Cardiac septum (tissue), 1 donor: ENCODE measurements at regions of chr4 and their contacts with region 1.

Region 1: DNA sequence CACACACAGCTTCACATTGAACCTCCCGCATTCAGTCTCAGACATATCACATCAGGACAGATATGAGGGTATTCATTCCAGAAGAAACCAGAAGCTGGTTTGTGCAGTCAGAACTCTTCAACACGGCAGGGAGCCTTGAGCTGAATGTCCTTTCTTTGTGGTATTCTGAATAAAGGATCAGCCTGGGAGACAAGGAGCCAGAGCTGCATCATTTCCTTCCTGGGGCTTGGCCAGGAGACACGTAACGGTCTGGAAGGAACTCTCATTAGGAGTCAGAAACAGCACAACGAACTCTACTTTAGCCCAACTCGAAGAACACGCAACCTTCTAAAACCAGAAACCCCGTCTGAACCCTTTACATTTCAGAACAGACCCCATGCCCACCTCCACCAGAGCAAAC is 46.4 kb downstream of the KDR start:
- DNase-seq: peak; percentile 82

Region 2: DNA sequence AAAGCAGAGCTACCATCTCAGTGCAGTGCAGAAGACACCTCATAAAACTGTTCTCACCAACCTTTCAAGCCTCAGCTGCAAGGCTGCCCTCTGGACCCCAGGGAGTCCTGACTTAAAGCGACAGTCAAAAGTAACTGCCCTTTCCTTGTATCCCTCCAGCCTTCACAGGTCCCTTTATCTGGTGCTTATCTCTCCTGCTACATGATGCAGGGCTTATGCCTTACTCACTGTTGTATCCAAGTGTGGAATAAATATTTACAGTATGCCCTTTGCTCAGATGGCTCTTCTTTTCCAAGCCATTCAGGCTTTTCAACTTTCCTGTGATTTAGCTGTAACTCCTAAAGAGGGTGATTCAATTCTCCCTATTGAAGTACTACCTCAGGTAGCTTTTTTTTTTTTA is 46.2 kb before region 1 on chr4:
- intact Hi-C with region 1: loop called (anchors 5 kb)
- DNase-seq: no peak

Region 3: GRCh38 chr4:55050418-55050950 is 28.5 kb before region 1 on chr4:
- intact Hi-C with region 1: no loop called
- DNase-seq: no peak